Thyroid gland (tissue), 4 donors: ENCODE measurements at regions of chr5 and their contacts with region 1.

Region 1: GRCh38 chr5:140244525-140245025 is 58.3 kb downstream of the PFDN1 start:
- DNase-seq: peak; percentile 90 to 93
- H3K4me3 ChIP-seq: no peak overlapping the region
- H3K27ac ChIP-seq: peak overlapping the region in 1 of 3 donors; percentile 58
- H3K4me1 ChIP-seq: peaks cover 47 to 67% of the 10 kb centered on the region in 2 donors
- H3K27me3 ChIP-seq: no peaks in the 10 kb centered on the region
- CTCF ChIP-seq: peak; percentile 61 to 94 (median 88)
- POLR2A ChIP-seq: no peak

Region 2: GRCh38 chr5:140169410-140169809 is 75.2 kb before region 1 on chr5:
- intact Hi-C with region 1: loop called (anchors 10 kb)
- DNase-seq: no peak
- H3K4me3 ChIP-seq: no peak overlapping the region
- H3K27ac ChIP-seq: no peak overlapping the region
- H3K4me1 ChIP-seq: peaks cover 8 to 9% of the 10 kb centered on the region in 2 donors
- H3K27me3 ChIP-seq: no peaks in the 10 kb centered on the region
- CTCF ChIP-seq: no peak
- POLR2A ChIP-seq: no peak

Region 3: DNA sequence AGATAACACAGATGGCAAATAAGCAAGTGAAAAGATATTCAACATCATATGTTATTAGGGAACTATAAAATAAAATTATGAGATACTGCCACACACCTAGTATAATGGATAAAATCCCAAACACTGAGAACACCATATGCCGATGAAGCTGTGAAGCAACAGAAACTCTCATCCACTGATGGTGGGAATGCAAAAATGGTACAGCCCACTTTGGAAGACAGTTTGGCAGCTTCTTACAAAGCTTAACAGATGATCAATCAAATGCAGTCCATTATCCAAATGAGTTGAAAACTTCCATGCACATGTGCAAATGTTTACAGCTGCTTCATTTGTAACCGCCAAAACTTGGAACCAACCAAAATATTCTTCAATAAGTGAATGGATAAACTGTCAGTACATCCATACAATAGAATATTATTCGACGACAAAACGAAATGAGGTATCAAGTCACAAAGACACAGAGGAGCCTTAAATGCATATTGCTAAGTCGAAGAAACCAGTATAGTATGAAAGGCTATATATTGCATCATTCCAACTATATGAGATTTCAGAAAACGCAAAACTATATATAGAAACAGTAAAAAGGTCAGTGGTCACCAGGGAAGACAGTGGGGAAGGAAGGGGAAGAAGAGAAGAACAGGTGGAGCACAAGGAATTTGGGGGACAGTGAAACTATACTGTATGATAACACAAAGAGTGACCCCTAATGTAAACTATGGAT is 43.4 kb after region 1 on chr5:
- intact Hi-C with region 1: loop called (anchors 5 kb)
- DNase-seq: no peak
- H3K4me3 ChIP-seq: no peak overlapping the region
- H3K27ac ChIP-seq: no peak overlapping the region
- H3K4me1 ChIP-seq: peaks cover 6 to 19% of the 10 kb centered on the region in 2 donors
- H3K27me3 ChIP-seq: no peaks in the 10 kb centered on the region
- CTCF ChIP-seq: no peak
- POLR2A ChIP-seq: no peak

Region 4: DNA sequence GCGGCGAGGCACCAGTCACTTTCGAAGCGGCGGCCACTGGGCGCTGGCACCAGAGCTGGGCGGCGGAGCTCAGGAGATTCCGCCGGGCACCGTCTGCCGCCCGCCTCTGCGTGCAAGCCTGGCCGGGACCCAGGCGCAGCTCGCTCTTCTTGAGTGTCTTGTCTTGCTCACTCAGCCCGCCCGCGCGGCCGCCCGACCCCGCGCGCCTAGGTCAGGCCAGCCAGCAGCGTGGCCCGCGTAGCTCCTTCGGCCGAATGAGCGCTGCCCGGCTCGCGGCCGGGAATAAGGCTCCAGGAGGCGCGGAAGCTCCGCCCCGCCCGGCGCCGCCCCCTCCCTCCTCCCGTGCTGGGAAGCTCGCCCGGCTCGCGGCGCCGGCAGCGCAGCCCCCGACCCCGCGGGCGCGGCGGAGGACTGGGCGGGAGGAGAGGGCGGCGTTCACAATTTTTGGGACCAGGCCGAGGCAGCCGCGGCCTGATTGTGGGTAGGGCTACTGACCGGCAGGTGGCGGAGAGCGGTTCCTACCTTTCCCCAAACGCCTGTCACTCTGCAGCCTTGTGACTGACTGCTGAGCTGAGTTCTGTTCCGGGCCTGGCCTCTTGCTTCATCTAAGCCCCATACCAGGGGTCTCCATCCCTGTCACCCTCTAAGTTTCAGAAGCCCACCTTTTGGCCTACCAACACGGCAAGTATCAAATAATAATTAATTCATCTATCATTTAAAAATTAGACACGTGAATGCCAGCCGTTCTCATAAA is 102.0 kb after region 1 on chr5 and contains the start of gene HBEGF:
- intact Hi-C with region 1: loop called (anchors 5 kb)
- DNase-seq: peak; percentile 89 to 92
- H3K4me3 ChIP-seq: peak within 1 kb of the TSS; percentile 10 to 85 (median 54)
- H3K27ac ChIP-seq: peak within 1 kb of the TSS; percentile 42 to 84 (median 82)
- H3K4me1 ChIP-seq: peaks cover 30 to 41% of the 10 kb centered on the region in 2 donors
- H3K27me3 ChIP-seq: no peaks in the 10 kb centered on the region
- CTCF ChIP-seq: peak in 5 of 6 experiments; percentile 49 to 74 (median 58)
- POLR2A ChIP-seq: peak; percentile 82 to 97
- total RNA-seq, gene HBEGF: 5.8 to 13.0 (median 12.6) TPM

Region 5: DNA sequence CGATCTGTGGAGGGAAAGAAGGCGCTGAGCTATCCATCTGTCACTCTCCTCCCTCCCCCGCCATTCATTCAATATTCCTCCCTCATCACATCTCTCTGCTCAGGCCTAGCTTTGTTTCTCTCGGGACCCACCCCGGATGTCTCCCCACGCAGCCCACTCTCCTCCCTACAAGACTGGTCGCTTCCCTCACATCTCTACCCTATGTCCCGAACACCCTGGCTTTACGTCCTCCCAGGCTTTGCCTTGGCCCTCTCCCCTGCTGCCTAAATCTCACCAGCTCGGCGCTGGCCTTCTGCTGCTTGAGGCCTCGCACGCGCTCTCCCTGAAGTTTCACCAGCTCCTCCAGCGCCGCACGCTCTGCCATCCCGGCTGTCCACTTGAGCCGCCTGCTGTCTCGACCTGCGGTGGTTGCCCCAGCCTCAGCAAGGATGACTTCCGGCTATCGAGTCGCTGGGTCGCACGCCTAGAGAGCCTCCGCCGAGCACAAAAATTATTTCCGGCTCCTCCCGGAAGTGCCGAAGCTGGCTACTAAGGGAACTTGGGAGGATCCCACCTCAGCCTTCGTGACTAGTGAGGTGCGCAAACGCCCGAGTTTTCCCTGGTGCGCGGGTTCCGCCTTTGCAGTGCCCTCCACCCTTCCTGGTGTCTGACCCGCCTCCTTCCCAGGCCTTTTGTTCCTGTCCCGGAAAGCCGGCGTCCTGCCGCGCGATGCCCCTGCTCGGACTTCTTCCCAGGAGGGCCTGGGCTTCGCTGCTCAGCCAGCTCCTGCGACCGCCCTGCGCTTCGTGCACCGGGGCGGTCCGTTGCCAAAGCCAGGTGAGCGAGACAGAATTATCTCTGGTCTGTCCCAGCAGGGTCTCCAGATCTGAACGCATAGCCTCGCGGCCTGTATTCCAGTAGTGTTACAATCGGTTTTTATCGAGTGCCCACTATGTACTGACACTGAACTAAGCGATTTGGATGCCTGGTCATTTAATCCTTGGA is 446.7 kb after region 1 on chr5 and contains the starts of genes HARS1 and HARS2:
- intact Hi-C with region 1: loop called (anchors 10 kb)
- DNase-seq: peak; percentile 90 to 92
- H3K4me3 ChIP-seq: peak within 1 kb of the TSS; percentile 12 to 58 (median 52)
- H3K27ac ChIP-seq: peak within 1 kb of the TSS; percentile 38 to 77 (median 69)
- H3K4me1 ChIP-seq: peaks cover 15% of the 10 kb centered on the region in 2 donors
- H3K27me3 ChIP-seq: no peaks in the 10 kb centered on the region
- CTCF ChIP-seq: peak in 2 of 6 experiments; percentile 8 to 14
- POLR2A ChIP-seq: peak in 1 of 2 donors; percentile 67
- total RNA-seq, gene HARS1: 41.0 to 56.8 (median 48.2) TPM
- total RNA-seq, gene HARS2: 29.3 to 31.8 (median 30.1) TPM